Activated CD8-positive, alpha-beta T cell treated with anti-CD3 and anti-CD28 coated beads for 36 hours (primary cell): ENCODE measurements at regions of chr5 and their contacts with region 1.

Region 1: DNA sequence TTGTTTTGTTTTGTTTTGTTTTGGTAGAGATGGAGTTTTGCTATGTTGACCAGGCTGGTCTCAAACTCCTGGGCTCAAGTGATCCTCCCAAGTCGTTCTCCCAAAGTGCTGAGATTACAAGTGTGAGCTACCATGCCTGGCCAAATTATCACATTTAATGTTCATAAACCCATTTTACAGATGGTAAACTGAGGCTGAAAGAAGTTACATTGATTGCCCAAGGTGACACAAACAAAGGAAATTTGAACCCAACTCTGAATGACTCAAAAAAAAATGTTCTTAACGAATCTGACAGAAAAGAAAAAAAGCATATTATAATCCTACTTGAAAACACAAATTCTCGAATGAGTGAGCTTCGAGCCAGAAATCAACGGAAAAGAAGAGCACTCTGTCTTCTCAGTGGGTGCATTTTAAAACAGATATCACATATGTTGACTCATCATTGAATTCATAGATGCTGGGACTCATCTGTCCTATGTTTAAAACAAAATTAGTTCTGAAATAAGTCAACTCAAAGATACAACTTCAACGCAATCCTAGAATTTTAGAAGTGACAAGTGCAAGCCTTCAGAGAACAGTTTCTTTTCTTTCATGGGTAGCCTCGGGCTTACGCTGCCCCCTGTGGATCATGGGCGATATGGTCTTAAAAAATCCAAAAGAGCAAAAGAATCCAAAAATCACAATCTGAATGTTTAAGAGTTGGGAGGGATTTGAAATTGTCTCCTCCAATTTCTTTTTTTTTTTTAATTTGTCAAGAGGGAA is 28.4 kb downstream of the TIMD4 start:
- DNase-seq: peak; percentile 82
- ATAC-seq: peak; percentile 74
- H3K4me3 Mint-ChIP-seq: no peak overlapping the region
- H3K27ac Mint-ChIP-seq: peak overlapping the region; percentile 71
- H3K4me1 Mint-ChIP-seq: peaks cover 50% of the 10 kb centered on the region
- H3K27me3 Mint-ChIP-seq: no peaks in the 10 kb centered on the region
- CTCF ChIP-seq: peak; percentile 93

Region 2: DNA sequence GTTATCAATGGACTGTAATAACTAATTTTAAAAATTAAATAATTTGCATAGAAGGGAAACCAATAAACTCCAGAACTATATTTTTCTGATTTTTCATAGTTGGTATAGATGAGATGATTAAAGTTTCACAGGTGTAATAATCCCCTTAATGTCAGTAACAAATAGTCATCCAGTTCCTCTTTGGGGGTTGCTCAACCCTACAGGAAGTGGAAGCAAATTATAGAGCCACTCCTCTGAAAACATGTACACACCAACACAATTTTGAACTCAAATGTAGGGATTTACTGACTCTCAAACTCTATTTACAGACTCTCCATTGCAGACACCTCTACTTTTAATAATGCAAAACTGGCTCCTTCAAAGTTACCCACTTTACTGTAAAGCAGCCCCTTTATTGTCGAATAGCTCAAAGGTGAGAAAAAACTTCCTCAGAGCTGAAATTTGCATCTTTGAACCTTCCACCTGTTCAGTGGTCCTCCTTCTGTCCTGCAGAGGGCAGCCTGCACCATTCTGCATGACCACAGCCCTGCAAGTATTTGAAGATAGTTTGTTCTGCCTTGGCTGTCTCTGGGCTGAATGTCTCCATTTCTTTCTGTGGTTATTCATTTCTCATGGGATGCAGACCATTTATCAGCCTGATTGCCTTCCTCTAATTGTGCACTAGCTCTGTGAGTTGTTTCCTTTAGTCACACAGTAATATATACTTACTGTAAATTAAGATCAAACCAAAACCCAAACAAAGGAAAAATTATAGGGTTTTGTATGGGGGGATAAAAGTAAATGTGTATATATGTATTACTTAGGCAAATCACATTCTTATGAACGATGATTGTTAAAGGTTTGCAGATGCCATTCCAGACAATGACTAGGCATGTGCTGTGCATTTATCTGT is 990.9 kb before region 1 on chr5:
- CTCF ChIA-PET with region 1: no interaction called
- POLR2A ChIA-PET with region 1: no interaction called
- intact Hi-C with region 1: loop called (anchors 10 kb)
- DNase-seq: peak; percentile 55
- ATAC-seq: peak; percentile 51
- H3K4me3 Mint-ChIP-seq: no peak overlapping the region
- H3K27ac Mint-ChIP-seq: no peak overlapping the region
- H3K4me1 Mint-ChIP-seq: peaks cover 5% of the 10 kb centered on the region
- H3K27me3 Mint-ChIP-seq: no peaks in the 10 kb centered on the region
- CTCF ChIP-seq: peak; percentile 63

Region 3: DNA sequence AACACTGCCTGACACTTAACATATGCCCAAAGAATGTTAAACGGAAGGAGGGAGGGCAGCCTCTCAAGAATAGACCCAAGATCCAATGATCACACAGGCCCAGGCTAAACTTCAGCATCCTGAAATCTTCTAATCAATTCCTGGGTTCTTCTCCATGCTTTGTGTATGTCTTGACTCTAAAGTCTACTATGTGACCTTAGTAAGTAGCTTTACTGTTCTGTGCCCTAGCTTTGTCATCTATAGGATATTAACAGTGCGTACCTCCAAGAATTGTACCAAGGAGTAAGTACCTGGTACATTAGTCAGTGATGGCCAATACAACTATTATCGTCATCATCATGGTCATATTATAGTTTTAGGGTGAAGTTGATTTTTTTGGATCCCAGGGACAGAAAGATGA is 511.0 kb before region 1 on chr5:
- CTCF ChIA-PET with region 1: no interaction called
- POLR2A ChIA-PET with region 1: no interaction called
- intact Hi-C with region 1: no loop called
- DNase-seq: no peak
- ATAC-seq: no peak
- H3K4me3 Mint-ChIP-seq: no peak overlapping the region
- H3K27ac Mint-ChIP-seq: no peak overlapping the region
- H3K4me1 Mint-ChIP-seq: no peaks in the 10 kb centered on the region
- H3K27me3 Mint-ChIP-seq: no peaks in the 10 kb centered on the region
- CTCF ChIP-seq: no peak

Region 4: DNA sequence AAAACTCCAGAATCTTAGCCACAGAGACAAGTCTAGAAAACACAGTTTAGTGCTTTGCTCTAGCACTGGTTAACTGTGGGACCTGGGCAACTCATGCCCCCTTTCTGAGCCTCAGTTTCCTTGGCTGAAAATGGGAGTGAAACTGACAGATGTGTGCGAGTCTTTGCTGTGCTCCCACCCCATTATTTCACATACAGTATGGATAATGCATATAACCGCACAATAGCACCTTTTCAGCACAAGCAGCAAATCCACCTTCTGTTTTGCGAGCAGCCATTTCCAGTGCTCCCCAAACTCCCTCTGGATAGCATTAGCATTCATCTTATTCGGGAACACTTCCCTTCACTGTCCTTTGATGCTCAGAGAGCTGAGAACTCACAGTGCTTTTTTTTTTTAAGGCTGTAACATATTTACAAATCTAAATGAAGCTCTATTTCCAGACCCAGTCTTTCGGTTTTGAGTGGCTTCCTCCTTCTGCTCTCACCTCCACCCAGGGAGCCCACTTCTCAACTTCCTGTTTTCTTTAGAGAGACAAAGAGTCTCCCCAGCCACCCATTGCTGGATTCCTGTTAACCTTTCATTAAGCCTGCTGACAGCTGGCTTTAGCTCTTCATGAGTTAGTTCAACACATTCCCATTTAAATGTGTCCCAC is 20.8 kb before region 1 on chr5:
- CTCF ChIA-PET with region 1: interaction called, 37 read pairs
- POLR2A ChIA-PET with region 1: interaction called, 3 read pairs
- intact Hi-C with region 1: no loop called
- DNase-seq: peak; percentile 51
- ATAC-seq: peak; percentile 77
- H3K4me3 Mint-ChIP-seq: peak overlapping the region; percentile 56
- H3K27ac Mint-ChIP-seq: peak overlapping the region; percentile 93
- H3K4me1 Mint-ChIP-seq: peaks cover 45% of the 10 kb centered on the region
- H3K27me3 Mint-ChIP-seq: no peaks in the 10 kb centered on the region
- CTCF ChIP-seq: no peak

Region 5: GRCh38 chr5:156920042-156920860 is 14.4 kb before region 1 on chr5:
- CTCF ChIA-PET with region 1: interaction called, 37 read pairs
- POLR2A ChIA-PET with region 1: interaction called, 10 read pairs
- intact Hi-C with region 1: no loop called
- DNase-seq: peak; percentile 90
- ATAC-seq: peak; percentile 77
- H3K4me3 Mint-ChIP-seq: peak overlapping the region; percentile 63
- H3K27ac Mint-ChIP-seq: peak overlapping the region; percentile 88
- H3K4me1 Mint-ChIP-seq: peaks cover 58% of the 10 kb centered on the region
- H3K27me3 Mint-ChIP-seq: no peaks in the 10 kb centered on the region
- CTCF ChIP-seq: no peak